ENCODE measurements at regions of chr20 and their contacts with region 1.

Region 1: DNA sequence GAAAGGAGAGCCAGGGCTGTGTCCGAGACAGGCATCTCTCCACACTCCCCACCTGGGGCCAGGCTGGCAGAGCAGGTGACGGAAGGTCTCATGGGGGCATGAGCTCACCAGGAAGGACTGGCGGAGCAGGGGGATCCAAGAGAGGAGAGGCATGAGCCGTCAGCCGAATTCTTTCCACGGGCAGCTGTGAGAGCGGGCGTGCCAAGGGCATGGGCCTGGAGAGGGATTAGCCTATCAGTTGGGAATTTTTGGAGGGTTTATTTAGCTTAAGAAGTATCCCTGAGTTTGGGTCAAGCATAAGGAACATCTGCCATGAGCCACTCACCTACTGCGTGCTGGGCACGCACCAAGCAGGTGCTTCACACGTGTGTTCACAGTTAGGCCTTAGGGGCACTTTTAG is 60.2 kb upstream of the ZNFX1 start:
- DNase-seq: no peak
- H3K4me3 ChIP-seq: no peak overlapping the region
- H3K27ac ChIP-seq: no peak overlapping the region
- H3K4me1 ChIP-seq: no peaks in the 10 kb centered on the region
- CTCF ChIP-seq: no peak

Region 2: DNA sequence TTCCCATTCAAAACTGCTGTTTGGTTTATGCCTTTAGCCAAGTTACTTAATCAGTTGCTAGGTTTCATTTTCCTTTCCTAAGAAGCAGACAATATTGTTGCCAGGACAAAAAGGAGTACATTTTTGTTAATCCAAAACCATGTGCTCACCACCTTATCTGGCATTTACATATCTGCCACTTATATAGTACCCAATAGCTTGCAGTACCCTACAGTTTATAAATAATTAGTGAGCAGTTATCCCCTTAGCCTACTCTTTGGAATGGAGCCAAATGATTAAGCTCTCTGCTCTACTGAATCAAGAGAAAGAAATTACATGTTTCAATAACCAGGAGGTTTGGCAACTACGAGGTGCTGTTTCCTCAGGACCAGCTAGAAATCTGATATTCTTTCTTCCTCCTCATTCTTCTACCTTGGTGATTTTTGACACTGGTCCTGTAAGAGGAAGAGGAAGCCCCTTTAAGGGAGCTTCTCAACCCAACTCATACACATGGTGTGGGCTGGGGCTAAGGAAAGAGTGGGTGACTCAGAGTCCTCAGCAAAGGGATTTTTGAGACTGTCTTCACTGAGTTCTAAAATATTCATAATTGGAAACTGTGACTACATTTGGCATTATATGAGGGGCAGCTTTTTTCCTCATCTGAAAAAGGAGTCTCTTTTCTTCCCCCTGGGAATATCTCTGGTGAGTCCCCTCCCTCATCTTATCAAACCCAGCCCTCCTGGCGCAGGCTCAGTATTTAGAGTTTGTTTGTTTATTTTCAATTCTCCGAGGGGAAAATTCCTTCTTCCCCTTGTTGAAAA is 61.7 kb before region 1 on chr20:
- CTCF ChIA-PET with region 1: no interaction called
- POLR2A ChIA-PET with region 1: no interaction called
- intact Hi-C with region 1: no loop called
- DNase-seq: peak; percentile 61
- H3K4me3 ChIP-seq: peak overlapping the region; percentile 100
- H3K27ac ChIP-seq: peak overlapping the region; percentile 90
- H3K4me1 ChIP-seq: peaks cover 31% of the 10 kb centered on the region
- CTCF ChIP-seq: no peak; the same call in 1 of the 2 replicates

Region 3: DNA sequence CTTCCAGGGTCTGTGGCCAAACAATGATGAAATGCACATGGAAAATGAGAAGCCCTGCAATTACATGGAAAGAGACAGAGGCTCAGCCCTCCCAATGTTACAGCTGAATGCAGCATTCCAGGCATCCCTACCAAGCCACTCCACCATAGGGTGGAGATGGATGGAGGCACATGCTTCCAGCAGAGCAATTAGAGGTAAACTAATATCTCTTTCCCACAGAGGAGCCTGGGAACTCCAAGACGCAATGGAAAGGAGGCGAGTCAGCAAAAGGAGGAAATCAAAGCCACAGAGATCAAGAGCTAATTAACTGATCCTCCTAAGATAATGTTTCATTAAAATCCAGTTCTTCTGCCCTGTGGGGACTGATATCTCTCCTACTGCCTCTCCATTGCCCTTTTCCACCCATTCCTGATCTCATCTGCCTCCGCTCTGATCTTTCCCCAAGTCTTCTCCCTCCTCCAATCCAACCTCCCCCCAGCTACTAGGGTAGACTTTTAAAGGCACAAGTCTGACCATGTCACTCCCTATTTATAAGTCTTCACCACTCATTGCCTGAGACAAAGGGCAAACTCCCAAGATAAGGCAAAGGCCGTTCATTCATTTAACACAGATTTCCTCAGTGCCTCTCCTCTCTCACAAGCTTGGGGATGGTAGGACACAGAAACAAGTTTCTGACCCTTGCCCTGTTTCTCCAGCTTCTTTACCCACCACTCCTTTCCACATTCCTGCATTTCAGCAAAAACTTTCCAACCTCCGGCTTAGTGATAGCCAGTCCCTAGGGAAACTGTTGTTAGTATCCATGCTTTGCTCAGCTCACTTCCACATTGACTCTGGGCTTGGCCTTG is 158.7 kb after region 1 on chr20:
- CTCF ChIA-PET with region 1: no interaction called
- POLR2A ChIA-PET with region 1: no interaction called
- intact Hi-C with region 1: no loop called
- DNase-seq: no peak
- H3K4me3 ChIP-seq: no peak overlapping the region
- H3K27ac ChIP-seq: no peak overlapping the region
- H3K4me1 ChIP-seq: no peaks in the 10 kb centered on the region
- CTCF ChIP-seq: no peak

Region 4: DNA sequence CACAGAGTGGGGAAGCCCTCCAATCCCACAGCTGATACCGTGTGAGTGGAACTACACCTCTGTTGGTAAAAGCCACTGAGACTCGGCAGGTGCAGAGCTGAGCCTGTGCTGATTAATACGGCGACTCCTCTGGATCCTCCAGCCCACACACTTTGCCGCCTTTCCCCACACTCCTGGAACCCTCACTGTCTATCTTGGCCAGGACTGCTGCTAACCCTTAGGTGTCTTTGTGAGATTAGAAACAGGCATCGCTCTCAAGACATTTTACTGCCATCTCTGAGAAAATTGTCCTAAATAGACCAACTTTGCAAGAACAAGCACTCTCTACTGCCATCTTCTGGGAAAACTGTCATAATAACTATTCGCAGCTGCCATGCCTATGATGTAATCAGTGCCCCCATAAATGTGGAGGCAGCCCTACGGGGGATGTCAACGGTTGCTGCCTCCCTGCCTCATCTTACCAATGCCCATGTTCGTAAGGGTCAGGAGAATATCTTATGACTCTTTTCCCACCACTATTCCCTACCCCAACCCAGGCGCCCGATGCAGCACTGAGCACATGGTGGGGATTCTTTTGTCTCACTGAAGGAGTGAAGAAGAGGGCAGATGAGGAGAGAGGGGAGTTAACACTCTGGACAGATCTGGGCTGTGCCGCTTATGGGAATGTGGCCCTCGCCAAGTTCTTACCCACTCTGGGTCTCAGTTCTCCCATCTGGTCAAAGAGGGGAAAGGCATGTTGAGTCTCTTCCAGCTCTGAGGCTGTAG is 170.6 kb after region 1 on chr20:
- CTCF ChIA-PET with region 1: interaction called, 3 read pairs
- POLR2A ChIA-PET with region 1: no interaction called
- intact Hi-C with region 1: loop called (anchors 1 kb)
- DNase-seq: peak; percentile 73
- H3K4me3 ChIP-seq: no peak overlapping the region
- H3K27ac ChIP-seq: no peak overlapping the region
- H3K4me1 ChIP-seq: no peaks in the 10 kb centered on the region
- CTCF ChIP-seq: peak; percentile 77

Region 5: GRCh38 chr20:49534255-49534712 is 196.2 kb after region 1 on chr20:
- CTCF ChIA-PET with region 1: no interaction called
- POLR2A ChIA-PET with region 1: no interaction called
- intact Hi-C with region 1: loop called (anchors 1 kb)
- DNase-seq: peak; percentile 81
- H3K4me3 ChIP-seq: no peak overlapping the region
- H3K27ac ChIP-seq: no peak overlapping the region
- H3K4me1 ChIP-seq: peaks cover 10% of the 10 kb centered on the region
- CTCF ChIP-seq: peak; percentile 94

Region 6: GRCh38 chr20:50217207-50217984 is 879.3 kb after region 1 on chr20:
- CTCF ChIA-PET with region 1: interaction called, 11 read pairs
- POLR2A ChIA-PET with region 1: no interaction called
- intact Hi-C with region 1: no loop called
- DNase-seq: no peak
- H3K4me3 ChIP-seq: no peak overlapping the region
- H3K27ac ChIP-seq: no peak overlapping the region
- H3K4me1 ChIP-seq: no peaks in the 10 kb centered on the region
- CTCF ChIP-seq: no peak

Measured in OCI-LY7 (cell line).